WTC11 (cell line): ENCODE measurements at regions of chr19 and their contacts with region 1.

Region 1: DNA sequence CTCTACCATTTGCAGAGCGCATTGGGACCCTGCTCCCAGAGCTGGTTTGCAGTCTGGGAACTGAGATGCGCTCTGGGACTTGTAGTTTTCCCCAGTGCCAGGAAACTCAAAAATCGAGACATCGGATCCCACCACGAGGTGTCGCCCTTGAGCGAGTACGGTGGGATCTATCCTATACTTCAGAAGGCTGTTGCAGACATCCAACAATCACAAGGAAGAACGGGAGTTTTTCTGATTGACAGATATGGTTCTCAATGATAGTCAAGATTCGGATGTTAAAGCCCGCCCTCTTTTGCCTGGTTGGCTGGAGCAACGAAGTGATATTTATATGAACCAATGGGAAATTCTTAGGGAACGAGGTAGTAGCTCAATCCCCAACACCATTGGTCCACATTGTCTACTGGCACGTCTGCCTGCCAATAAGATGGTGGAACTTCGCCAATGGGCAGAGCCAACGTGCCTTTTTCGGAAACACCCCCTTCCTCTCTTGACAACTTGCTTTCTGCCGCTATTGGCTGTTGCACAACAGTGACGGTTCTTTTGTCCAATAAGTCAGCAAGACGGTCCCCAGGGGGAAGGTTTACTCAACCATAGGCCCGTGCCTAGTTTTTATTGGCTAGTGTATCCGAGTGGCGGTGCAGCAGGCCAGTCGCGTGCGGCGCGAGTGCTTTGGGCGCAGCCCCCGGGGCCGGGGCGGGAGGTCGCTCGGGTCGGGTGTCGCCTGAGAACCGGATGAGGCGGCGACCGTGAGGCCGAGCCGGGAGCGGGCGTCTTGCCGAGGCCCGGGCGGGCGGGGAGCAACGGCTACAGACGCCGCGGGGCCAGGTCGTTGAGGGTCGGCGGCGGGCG is at the start of gene DNM2:
- DNase-seq: peak; percentile 100
- ATAC-seq: peak; percentile 91
- H3K4me3 Mint-ChIP-seq: peak within 1 kb of the TSS; percentile 89
- H3K27ac Mint-ChIP-seq: peak within 1 kb of the TSS; percentile 90
- H3K4me1 Mint-ChIP-seq: peaks cover 12% of the 10 kb centered on the region
- H3K27me3 Mint-ChIP-seq: no peaks in the 10 kb centered on the region
- CTCF ChIP-seq: peak; percentile 70
- total RNA-seq, gene DNM2: 120 to 131 TPM (median 123 TPM) in 3 replicates

Region 2: GRCh38 chr19:10602330-10603083 is 115.1 kb before region 1 on chr19:
- CTCF ChIA-PET with region 1: no interaction called
- POLR2A ChIA-PET with region 1: no interaction called
- DNase-seq: peak; percentile 91
- ATAC-seq: peak; percentile 95
- H3K4me3 Mint-ChIP-seq: peak overlapping the region; percentile 84
- H3K27ac Mint-ChIP-seq: no peak overlapping the region
- H3K4me1 Mint-ChIP-seq: peaks cover 12% of the 10 kb centered on the region
- H3K27me3 Mint-ChIP-seq: peaks cover 18% of the 10 kb centered on the region
- CTCF ChIP-seq: no peak

Region 3: GRCh38 chr19:10644260-10645007 is 73.1 kb before region 1 on chr19:
- CTCF ChIA-PET with region 1: interaction called, 11 read pairs
- POLR2A ChIA-PET with region 1: no interaction called
- DNase-seq: peak; percentile 93
- ATAC-seq: peak; percentile 91
- H3K4me3 Mint-ChIP-seq: peak overlapping the region; percentile 14; the same call in 1 of the 2 replicates
- H3K27ac Mint-ChIP-seq: peak overlapping the region; percentile 93
- H3K4me1 Mint-ChIP-seq: peaks cover 31% of the 10 kb centered on the region
- H3K27me3 Mint-ChIP-seq: no peaks in the 10 kb centered on the region
- CTCF ChIP-seq: peak; percentile 61; the same call in 1 of the 2 replicates

Region 4: GRCh38 chr19:10662384-10663251 is 55.0 kb before region 1 on chr19:
- CTCF ChIA-PET with region 1: no interaction called
- POLR2A ChIA-PET with region 1: no interaction called
- DNase-seq: no peak
- ATAC-seq: no peak; the same call in 1 of the 2 replicates
- H3K4me3 Mint-ChIP-seq: no peak overlapping the region
- H3K27ac Mint-ChIP-seq: peak overlapping the region; percentile 96
- H3K4me1 Mint-ChIP-seq: peaks cover 33% of the 10 kb centered on the region
- H3K27me3 Mint-ChIP-seq: no peaks in the 10 kb centered on the region
- CTCF ChIP-seq: no peak

Region 5: GRCh38 chr19:10756371-10756770 is 38.8 kb after region 1 on chr19:
- CTCF ChIA-PET with region 1: interaction called, 16 read pairs
- POLR2A ChIA-PET with region 1: interaction called, 3 read pairs
- DNase-seq: no peak
- ATAC-seq: peak; percentile 31; the same call in 1 of the 2 replicates
- H3K4me3 Mint-ChIP-seq: no peak overlapping the region
- H3K27ac Mint-ChIP-seq: peak overlapping the region; percentile 57; the same call in 1 of the 2 replicates
- H3K4me1 Mint-ChIP-seq: peaks cover 35% of the 10 kb centered on the region
- H3K27me3 Mint-ChIP-seq: no peaks in the 10 kb centered on the region
- CTCF ChIP-seq: no peak

Region 6: GRCh38 chr19:10828981-10829821 is 111.6 kb after region 1 on chr19:
- CTCF ChIA-PET with region 1: interaction called, 23 read pairs
- POLR2A ChIA-PET with region 1: no interaction called
- DNase-seq: peak; percentile 56
- ATAC-seq: peak; percentile 70
- H3K4me3 Mint-ChIP-seq: no peak overlapping the region
- H3K27ac Mint-ChIP-seq: no peak overlapping the region; the same call in 1 of the 2 replicates
- H3K4me1 Mint-ChIP-seq: no peaks in the 10 kb centered on the region
- H3K27me3 Mint-ChIP-seq: no peaks in the 10 kb centered on the region
- CTCF ChIP-seq: no peak

Region 7: GRCh38 chr19:10864538-10864899 is 146.9 kb after region 1 on chr19:
- CTCF ChIA-PET with region 1: interaction called, 53 read pairs
- POLR2A ChIA-PET with region 1: interaction called, 3 read pairs
- DNase-seq: peak; percentile 91
- ATAC-seq: peak; percentile 91
- H3K4me3 Mint-ChIP-seq: no peak overlapping the region
- H3K27ac Mint-ChIP-seq: no peak overlapping the region
- H3K4me1 Mint-ChIP-seq: peaks cover 8% of the 10 kb centered on the region
- H3K27me3 Mint-ChIP-seq: no peaks in the 10 kb centered on the region; the same call in 1 of the 2 replicates
- CTCF ChIP-seq: peak; percentile 83